Endothelial cell of umbilical vein (primary cell): ENCODE measurements at regions of chr11 and their contacts with region 1.

Region 1: GRCh38 chr11:123580557-123581275 is 73.7 kb downstream of the SCN3B start:
- DNase-seq: peak; percentile 49
- H3K4me3 ChIP-seq: no peak overlapping the region
- H3K27ac ChIP-seq: no peak overlapping the region
- H3K4me1 ChIP-seq: peaks cover 5% of the 10 kb centered on the region
- H3K27me3 ChIP-seq: peaks cover 2 to 4% of the 10 kb centered on the region in 2 experiments
- CTCF ChIP-seq: peak; percentile 91 to 98
- POLR2A ChIP-seq: no peak

Region 2: GRCh38 chr11:123344790-123345357 is 235.8 kb before region 1 on chr11:
- CTCF ChIA-PET with region 1: no interaction called
- POLR2A ChIA-PET with region 1: no interaction called
- dilution Hi-C with region 1: no loop called
- intact Hi-C with region 1: no loop called
- DNase-seq: no peak
- H3K4me3 ChIP-seq: no peak overlapping the region
- H3K27ac ChIP-seq: no peak overlapping the region
- H3K4me1 ChIP-seq: no peaks in the 10 kb centered on the region
- H3K27me3 ChIP-seq: no peaks in the 10 kb centered on the region
- CTCF ChIP-seq: no peak
- POLR2A ChIP-seq: no peak

Region 3: GRCh38 chr11:123511037-123511870 is 69.5 kb before region 1 on chr11:
- CTCF ChIA-PET with region 1: interaction called, 31 read pairs
- POLR2A ChIA-PET with region 1: no interaction called
- dilution Hi-C with region 1: no loop called
- intact Hi-C with region 1: loop called (anchors 1 kb)
- DNase-seq: peak; percentile 83
- H3K4me3 ChIP-seq: no peak overlapping the region
- H3K27ac ChIP-seq: no peak overlapping the region
- H3K4me1 ChIP-seq: peaks cover 8% of the 10 kb centered on the region
- H3K27me3 ChIP-seq: no peaks in the 10 kb centered on the region
- CTCF ChIP-seq: peak; percentile 93 to 97
- POLR2A ChIP-seq: no peak

Region 4: DNA sequence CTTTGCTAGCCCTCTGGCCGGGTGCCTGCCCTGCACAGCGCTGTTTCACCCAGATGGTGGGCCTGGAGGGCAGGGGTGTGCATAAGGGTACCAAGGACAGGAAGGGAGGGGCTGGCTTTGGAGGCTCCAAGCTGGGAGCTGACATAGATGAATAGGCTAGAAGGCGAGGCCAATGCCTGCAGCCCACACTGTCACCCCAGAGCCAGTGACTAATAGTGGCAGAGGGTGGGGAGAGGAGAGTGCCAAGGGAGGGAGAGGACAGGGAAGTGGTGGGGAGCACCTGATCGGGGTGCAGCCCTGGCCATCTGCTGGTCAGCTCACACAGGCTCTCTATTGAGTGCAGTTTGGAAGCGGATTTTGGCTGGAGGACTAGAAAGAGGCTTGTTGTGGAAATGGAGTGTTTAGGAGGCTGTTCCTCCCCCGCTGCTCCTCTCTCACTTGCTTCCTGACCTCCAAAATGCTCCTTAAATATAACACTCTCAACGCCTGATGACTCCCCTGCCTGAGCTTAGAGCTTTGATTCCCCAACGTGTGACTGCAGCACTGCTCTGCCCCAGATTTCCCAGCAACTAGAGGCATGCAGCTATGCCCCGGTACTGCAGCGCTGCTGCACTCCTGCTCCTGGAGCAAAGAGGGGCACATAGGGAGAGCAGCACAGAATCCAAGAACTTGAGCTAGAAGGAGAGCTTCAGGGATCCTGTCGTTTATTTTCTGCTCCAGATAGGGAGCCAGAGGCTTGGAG is 61.5 kb before region 1 on chr11:
- CTCF ChIA-PET with region 1: interaction called, 16 read pairs
- POLR2A ChIA-PET with region 1: no interaction called
- dilution Hi-C with region 1: no loop called
- intact Hi-C with region 1: no loop called
- DNase-seq: no peak
- H3K4me3 ChIP-seq: no peak overlapping the region
- H3K27ac ChIP-seq: no peak overlapping the region
- H3K4me1 ChIP-seq: no peaks in the 10 kb centered on the region
- H3K27me3 ChIP-seq: peaks cover 0 to 3% of the 10 kb centered on the region in 2 experiments
- CTCF ChIP-seq: no peak
- POLR2A ChIP-seq: no peak

Region 5: DNA sequence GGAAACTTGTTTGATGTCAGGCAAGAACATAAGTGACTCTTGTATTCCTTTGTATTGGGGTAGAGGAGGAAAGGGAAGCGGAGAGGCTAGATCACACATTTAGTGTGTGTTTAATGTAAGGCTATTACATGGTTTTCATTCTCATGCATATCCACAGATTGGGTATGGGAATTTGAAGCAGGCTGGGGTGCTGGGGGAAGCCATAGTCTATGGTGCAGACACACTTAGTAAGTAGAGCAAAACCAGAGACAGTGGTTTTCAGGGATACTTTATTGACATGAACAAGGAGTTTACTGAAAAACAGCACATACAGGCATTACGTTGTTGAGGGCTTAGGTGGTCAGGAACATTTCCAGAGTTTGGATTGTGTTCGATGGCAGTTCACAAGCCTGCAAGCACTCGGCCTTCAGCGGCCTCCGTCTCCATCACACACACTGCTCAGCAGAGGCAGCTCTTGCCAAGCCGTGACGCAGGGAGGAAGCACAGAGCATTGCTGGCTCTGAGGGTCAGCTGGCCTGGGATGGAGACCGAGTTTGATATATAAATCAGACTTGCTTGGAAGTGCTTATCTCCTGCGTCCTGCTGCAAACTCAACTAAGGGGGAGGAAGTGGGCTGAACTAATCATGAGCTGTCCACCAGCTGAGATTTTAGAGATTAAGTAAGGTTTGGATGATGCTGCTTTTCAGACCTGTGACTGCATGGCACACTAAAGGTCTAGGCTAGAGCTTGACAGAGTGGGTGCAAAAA is 48.4 kb after region 1 on chr11:
- CTCF ChIA-PET with region 1: interaction called, 14 read pairs
- POLR2A ChIA-PET with region 1: no interaction called
- dilution Hi-C with region 1: no loop called
- intact Hi-C with region 1: no loop called
- DNase-seq: peak; percentile 91
- H3K4me3 ChIP-seq: no peak overlapping the region
- H3K27ac ChIP-seq: peak overlapping the region; percentile 13
- H3K4me1 ChIP-seq: peaks cover 5% of the 10 kb centered on the region
- H3K27me3 ChIP-seq: no peaks in the 10 kb centered on the region
- CTCF ChIP-seq: no peak
- POLR2A ChIP-seq: no peak

Region 6: DNA sequence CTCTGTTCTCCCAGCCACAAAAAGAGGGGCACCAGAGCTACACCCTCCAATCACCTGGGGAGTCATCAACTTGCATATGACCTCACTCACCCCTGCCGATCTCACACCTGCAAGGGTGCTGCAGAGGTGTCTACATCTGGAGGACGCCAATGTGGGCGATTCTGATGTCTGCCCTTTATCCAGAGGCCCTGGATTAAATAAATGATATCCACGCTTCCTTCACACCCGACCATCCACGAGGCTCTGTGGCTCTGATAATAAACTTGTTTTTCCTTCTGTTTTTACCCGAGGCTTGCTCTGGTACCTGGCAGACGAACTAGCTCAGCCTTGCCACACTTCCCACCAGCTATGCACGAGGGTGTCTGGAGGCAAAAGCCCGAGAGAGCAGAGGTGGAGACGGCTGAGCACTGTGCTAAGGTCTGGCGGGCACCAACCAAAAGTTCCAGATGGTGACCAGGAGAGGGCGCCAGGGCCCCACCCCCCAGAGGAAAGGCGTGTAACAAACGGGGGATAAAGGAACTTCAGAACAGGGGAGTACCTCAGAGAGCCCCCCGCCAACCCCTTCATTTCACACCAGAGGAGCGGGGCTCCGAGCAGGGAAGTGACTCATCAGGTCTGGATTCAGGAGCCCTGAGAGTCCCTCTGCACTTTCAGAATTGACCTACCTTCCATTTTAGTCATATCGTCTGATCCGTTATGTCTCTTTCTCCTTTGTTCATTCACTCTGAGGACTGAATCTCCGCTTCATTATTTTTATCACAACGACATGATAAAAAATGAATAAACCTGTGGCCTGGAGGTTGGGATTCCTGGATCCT is 60.2 kb after region 1 on chr11:
- CTCF ChIA-PET with region 1: interaction called, 13 read pairs
- POLR2A ChIA-PET with region 1: no interaction called
- dilution Hi-C with region 1: no loop called
- intact Hi-C with region 1: loop called (anchors 1 kb)
- DNase-seq: peak; percentile 49
- H3K4me3 ChIP-seq: no peak overlapping the region
- H3K27ac ChIP-seq: no peak overlapping the region
- H3K4me1 ChIP-seq: no peaks in the 10 kb centered on the region
- H3K27me3 ChIP-seq: no peaks in the 10 kb centered on the region
- CTCF ChIP-seq: peak; percentile 70 to 89
- POLR2A ChIP-seq: no peak